H1 (cell line): ENCODE measurements at regions of chr5 and their contacts with region 1.

Region 1: GRCh38 chr5:141524604-141525597 is 36.0 kb downstream of the PCDHGC5 start:
- DNase-seq: peak; percentile 90 to 95
- H3K4me3 ChIP-seq: no peak overlapping the region
- H3K27ac ChIP-seq: peak overlapping the region; percentile 26; the same call in 1 of the 2 replicates
- H3K4me1 ChIP-seq: peaks cover 2 to 15% (median 8%) of the 10 kb centered on the region in 4 experiments; a peak in 6 of 7 replicates
- H3K27me3 ChIP-seq: no peaks in the 10 kb centered on the region
- CTCF ChIP-seq: peak; percentile 99 to 100 (median 99)
- EP300 ChIP-seq: peak in 1 of 2 experiments; percentile 68; a peak in 1 of 3 replicates
- POLR2A ChIP-seq: no peak
- RAD21 ChIP-seq: peak; percentile 90 to 91

Region 2: DNA sequence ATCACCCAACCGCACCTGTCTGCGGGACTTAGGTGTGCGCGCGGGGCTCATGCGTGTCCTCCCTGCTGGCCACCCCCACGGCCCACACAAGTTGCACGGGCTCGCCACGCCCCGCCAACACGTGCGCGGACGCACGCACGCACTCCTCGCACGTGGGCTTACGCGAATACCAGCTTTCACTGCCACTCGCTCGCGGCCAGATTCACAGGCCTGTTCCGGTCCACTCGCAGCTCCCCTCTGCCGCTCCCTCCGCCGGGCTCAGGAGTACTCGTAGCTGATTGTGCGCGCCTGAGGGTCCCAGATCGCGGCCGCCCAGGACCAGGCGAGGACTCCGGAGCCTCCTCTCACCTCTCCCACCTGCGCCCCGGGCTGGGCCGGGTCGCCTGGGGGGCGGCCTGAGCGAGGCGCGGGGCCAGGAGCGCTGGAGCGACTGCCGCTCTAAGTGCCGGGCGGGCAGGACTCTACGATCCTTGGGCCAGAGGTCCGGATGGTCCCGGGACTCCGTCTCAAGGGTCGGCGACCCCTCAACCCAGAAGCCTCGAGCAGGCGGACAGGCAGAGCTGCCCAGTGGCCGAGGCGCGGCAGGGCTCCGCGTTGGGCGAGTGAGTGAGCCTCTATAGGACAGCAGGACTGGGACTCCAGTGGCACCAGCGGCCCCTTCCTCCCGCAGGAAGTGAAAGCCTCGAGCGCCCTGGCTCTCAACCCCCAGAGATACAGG is 32.6 kb before region 1 on chr5:
- CTCF ChIA-PET with region 1: interaction called, 56 read pairs
- POLR2A ChIA-PET with region 1: interaction called, 3 read pairs
- DNase-seq: no peak
- H3K4me3 ChIP-seq: peak overlapping the region; percentile 17 to 60 (median 46)
- H3K27ac ChIP-seq: no peak overlapping the region
- H3K4me1 ChIP-seq: peaks cover 6 to 37% (median 26%) of the 10 kb centered on the region in 4 experiments
- H3K27me3 ChIP-seq: peaks cover 13 to 40% (median 36%) of the 10 kb centered on the region in 4 experiments; a peak in 6 of 7 replicates
- CTCF ChIP-seq: no peak
- EP300 ChIP-seq: no peak
- POLR2A ChIP-seq: no peak
- RAD21 ChIP-seq: no peak

Region 3: GRCh38 chr5:141501761-141502160 is 23.1 kb before region 1 on chr5:
- CTCF ChIA-PET with region 1: interaction called, 178 read pairs
- POLR2A ChIA-PET with region 1: interaction called, 3 read pairs
- DNase-seq: no peak
- H3K4me3 ChIP-seq: no peak overlapping the region
- H3K27ac ChIP-seq: no peak overlapping the region
- H3K4me1 ChIP-seq: no peaks in the 10 kb centered on the region; a peak in 1 of 7 replicates
- H3K27me3 ChIP-seq: no peaks in the 10 kb centered on the region
- CTCF ChIP-seq: no peak
- EP300 ChIP-seq: no peak
- POLR2A ChIP-seq: no peak
- RAD21 ChIP-seq: no peak